ENCODE measurements at regions of chrX and their contacts with region 1.

Region 1: GRCh38 chrX:69280933-69281332 is 115.7 kb upstream of the PJA1 start:
- DNase-seq: no peak
- H3K4me3 ChIP-seq: no peak overlapping the region
- H3K4me1 ChIP-seq: peaks cover 86% of the 10 kb centered on the region
- H3K27me3 ChIP-seq: no peaks in the 10 kb centered on the region

Region 2: GRCh38 chrX:69133921-69134542 is 146.9 kb before region 1 on chrX:
- in situ Hi-C with region 1: loop called (anchors 5 kb)
- DNase-seq: peak; percentile 91 to 94
- H3K4me3 ChIP-seq: no peak overlapping the region
- H3K4me1 ChIP-seq: peaks cover 76% of the 10 kb centered on the region
- H3K27me3 ChIP-seq: no peaks in the 10 kb centered on the region

Region 3: DNA sequence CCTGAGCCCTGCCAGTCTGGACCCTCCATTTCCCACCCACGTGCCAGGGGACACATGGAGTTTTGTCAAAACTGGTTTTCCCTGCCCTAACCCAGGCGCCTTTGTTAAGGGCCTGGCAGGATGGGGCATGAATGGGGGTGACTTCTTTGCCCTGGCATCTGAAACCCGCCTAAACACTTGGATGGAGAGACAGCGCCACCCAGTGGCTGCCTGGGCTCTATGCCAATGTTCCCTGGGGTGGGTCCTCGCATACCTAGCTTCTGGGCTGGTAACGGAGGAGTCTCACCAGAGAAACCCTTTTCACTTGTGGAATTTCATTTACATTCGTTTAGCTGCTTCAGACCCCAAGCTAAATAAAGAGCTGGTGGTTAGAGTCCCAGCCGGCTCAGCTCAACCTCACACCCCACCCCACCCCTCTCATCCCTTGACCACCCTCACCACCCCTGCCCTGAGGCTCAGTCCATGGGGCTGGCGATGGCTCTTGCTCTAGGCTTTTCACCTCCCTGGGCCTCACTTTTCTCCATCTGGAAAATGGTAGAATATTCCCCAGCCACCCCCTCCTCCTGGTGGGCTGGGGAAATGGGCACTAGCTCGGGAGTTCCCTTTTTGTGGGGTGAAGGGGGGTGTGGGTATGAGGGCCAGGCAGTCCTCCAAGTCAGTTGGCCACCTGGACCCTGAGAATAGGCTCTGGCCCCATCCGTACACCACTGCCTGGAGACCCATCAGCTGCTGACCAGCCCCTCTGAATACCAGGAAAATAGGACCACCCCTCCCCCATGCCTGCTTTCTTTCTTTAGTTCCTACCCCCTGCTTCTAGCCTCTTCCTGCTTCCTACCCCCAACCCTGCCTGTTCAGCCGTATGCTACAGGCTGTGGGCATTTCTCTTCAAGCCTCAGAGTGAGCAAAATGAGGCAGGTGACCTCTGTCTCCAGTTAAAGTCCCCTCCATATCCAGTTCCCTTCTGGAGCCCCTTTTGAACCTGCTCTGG is 58.5 kb before region 1 on chrX:
- in situ Hi-C with region 1: loop called (anchors 5 kb)
- DNase-seq: peak; percentile 96 to 97
- H3K4me3 ChIP-seq: peak overlapping the region; percentile 37
- H3K4me1 ChIP-seq: peaks cover 24% of the 10 kb centered on the region
- H3K27me3 ChIP-seq: no peaks in the 10 kb centered on the region

Region 4: DNA sequence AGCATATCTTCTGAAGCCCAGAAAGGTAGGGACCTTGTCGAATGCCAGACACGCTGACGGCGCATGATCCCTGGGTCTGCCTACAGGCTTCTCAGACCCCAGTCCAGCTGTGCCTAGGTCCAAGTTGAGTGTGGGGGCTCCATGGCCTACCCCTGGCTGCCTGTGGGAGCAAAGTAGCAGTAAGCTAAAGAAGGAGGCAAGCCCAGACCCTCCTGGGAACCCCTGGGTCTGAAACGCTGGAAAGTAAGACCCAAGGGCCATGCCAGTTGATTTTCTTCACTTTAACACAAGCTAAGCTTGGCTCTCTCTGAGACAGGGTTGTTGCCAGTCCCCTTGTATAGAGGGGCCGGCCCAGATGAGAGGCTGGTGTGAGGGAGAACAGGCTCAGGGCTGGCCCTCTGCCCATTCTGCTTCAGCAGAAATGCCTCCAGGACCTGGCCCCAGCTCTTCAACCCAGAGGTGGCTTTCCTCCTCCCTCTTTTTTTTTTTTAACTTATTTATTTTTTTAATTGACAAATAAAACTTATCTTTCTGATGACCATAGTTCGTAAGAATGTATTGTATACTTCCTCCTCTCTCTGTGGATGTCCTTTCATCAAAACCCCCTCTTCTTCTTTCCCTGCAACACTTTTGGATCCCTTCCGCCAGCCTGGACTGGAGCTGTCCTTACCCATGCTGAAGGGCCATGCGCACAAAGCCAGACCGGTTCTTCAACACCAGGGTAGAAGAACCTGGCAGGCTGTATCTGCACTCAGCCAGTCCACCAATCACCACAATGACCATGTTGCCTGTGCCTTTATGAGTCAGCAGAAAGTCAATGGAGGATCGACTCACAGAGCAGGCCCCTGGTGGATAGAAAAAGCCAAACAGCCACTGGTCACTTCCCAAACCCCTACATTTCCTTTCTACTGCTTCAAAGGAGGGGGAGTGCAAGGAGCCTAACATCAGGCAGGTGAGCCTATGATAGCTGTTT is 761.8 kb after region 1 on chrX:
- in situ Hi-C with region 1: no loop called
- DNase-seq: no peak
- H3K4me3 ChIP-seq: no peak overlapping the region
- H3K4me1 ChIP-seq: no peaks in the 10 kb centered on the region
- H3K27me3 ChIP-seq: no peaks in the 10 kb centered on the region

Measured in HAP-1 (cell line).